MCF 10A (cell line): ENCODE measurements at regions of chr3 and their contacts with region 1.

Region 1: GRCh38 chr3:170180908-170181879 is at the start of gene PHC3:
- DNase-seq: peak; percentile 93
- H3K4me3 Mint-ChIP-seq: peak within 1 kb of the TSS; percentile 89
- H3K27ac Mint-ChIP-seq: peak within 1 kb of the TSS; percentile 96
- H3K4me1 Mint-ChIP-seq: peaks cover 6% of the 10 kb centered on the region
- H3K27me3 Mint-ChIP-seq: no peaks in the 10 kb centered on the region
- CTCF ChIP-seq: no peak
- total RNA-seq, gene PHC3: 54.3 and 65.3 TPM in 2 replicates

Region 2: DNA sequence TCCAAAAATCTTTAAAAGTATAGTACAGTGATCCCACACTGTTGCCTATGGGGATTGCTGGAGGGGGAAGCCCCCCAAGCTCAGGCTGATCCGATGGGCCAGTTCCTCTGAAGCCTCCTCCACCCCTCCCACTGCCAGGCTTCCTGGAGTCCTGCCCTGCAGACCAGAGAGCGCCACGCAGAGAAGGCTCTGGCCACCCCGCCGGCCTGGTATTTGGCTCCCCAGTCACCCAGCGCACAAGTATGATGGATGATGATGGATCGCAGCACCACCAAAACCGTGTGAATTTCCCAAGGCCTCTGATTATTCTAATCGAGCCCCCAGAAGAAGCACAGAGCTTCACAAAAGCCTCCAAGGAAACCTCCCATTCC is 776.7 kb before region 1 on chr3:
- CTCF ChIA-PET with region 1: no interaction called
- POLR2A ChIA-PET with region 1: no interaction called
- intact Hi-C with region 1: no loop called
- DNase-seq: no peak
- H3K4me3 Mint-ChIP-seq: no peak overlapping the region
- H3K27ac Mint-ChIP-seq: peak overlapping the region; percentile 37
- H3K4me1 Mint-ChIP-seq: no peaks in the 10 kb centered on the region
- H3K27me3 Mint-ChIP-seq: no peaks in the 10 kb centered on the region
- CTCF ChIP-seq: no peak

Region 3: DNA sequence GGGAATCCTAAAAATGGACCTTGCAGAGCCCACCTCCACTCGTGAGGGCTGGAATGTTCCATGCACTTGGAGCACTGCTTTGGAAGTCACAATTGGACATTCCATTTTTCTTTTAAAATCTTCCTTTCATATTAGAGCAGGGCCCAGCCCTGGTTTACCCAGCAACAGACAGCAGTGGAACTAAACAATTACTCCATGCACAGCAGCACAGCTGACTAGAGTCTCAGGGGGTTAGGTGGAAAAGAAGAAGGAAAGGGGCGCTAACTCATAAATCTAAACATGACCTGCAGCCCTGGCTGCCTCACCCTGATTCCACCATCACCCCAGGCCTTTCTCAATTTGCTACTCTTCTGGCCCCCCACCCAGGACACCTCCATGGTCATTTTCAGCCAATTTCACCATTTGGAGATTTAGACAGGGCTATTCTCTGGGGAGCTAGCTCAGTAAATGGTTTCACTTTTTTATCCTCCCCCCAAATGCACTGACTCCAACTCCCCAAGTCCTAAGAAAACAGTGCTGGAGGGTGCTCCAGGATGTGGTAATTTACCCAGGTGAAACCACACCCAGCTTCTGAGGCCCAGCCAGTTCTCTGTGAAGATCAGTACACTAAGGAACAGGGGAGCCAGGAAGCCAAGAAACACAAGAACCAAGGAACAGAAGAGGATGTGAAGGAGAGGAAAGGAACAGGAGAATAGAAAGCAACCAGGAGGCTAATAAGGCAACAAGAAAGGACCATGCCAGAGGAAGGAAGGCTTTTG is 309.9 kb before region 1 on chr3:
- CTCF ChIA-PET with region 1: no interaction called
- POLR2A ChIA-PET with region 1: no interaction called
- intact Hi-C with region 1: loop called (anchors 5 kb)
- DNase-seq: peak; percentile 14
- H3K4me3 Mint-ChIP-seq: no peak overlapping the region
- H3K27ac Mint-ChIP-seq: no peak overlapping the region
- H3K4me1 Mint-ChIP-seq: peaks cover 7% of the 10 kb centered on the region
- H3K27me3 Mint-ChIP-seq: no peaks in the 10 kb centered on the region
- CTCF ChIP-seq: no peak

Region 4: DNA sequence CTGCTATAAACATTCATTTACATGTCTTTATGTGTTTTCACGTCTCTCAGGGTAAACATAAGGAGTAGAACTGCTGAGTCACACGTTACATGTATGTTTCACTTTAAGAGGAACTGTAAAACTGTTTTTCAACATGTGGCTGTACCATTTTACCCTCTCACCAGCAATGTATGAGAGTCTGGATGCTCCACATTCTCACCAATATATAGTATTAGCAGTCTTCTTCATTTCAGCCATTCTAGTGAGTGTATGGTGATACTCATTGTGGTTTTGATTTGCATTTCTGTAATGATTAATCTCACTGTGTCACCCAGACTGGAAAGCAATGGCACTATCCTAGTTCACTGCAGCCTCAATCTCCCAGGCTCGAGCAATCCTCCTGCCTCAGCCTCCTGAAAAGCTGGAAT is 36.8 kb before region 1 on chr3:
- CTCF ChIA-PET with region 1: no interaction called
- POLR2A ChIA-PET with region 1: no interaction called
- intact Hi-C with region 1: no loop called
- DNase-seq: no peak
- H3K4me3 Mint-ChIP-seq: no peak overlapping the region
- H3K27ac Mint-ChIP-seq: no peak overlapping the region
- H3K4me1 Mint-ChIP-seq: no peaks in the 10 kb centered on the region
- H3K27me3 Mint-ChIP-seq: no peaks in the 10 kb centered on the region
- CTCF ChIP-seq: no peak

Region 5: DNA sequence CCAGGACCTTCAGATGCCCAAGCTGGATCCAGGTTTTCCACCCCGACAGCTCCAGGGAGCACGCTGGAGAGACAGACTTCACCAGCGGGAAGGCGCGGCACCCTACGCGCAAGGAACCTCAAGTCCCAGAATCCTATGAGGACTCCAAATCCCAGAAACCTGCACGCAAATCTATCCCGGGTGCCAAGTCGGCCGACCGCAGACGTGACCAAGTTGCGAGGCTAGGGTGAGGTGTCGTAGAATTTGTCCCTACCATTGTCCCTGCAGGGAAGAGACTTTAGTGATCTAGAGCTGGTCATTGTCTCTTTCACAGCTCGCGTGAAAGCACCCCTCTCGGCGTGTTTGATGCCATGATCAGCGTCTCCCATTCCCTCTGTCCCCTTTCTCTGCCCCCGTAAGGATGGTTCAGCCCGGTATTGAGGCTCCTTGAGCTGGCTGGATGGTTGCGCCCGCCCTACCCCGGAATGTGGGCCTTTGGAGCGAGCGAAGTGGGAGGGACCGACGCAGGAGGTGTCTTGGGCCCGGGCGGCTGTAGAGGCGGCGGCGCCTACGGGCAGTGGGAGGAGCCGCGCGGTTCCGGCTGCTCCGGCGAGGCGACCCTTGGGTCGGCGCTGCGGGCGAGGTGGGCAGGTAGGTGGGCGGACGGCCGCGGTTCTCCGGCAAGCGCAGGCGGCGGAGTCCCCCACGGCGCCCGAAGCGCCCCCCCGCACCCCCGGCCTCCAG is 40.9 kb after region 1 on chr3 and contains the start of gene PRKCI:
- CTCF ChIA-PET with region 1: interaction called, 6 read pairs
- POLR2A ChIA-PET with region 1: interaction called, 35 read pairs
- intact Hi-C with region 1: loop called (anchors 5 kb)
- DNase-seq: peak; percentile 98
- H3K4me3 Mint-ChIP-seq: peak within 1 kb of the TSS; percentile 86
- H3K27ac Mint-ChIP-seq: peak within 1 kb of the TSS; percentile 99
- H3K4me1 Mint-ChIP-seq: peaks cover 24% of the 10 kb centered on the region
- H3K27me3 Mint-ChIP-seq: no peaks in the 10 kb centered on the region
- CTCF ChIP-seq: no peak
- total RNA-seq, gene PRKCI: 46.3 and 62.8 TPM in 2 replicates

Region 6: DNA sequence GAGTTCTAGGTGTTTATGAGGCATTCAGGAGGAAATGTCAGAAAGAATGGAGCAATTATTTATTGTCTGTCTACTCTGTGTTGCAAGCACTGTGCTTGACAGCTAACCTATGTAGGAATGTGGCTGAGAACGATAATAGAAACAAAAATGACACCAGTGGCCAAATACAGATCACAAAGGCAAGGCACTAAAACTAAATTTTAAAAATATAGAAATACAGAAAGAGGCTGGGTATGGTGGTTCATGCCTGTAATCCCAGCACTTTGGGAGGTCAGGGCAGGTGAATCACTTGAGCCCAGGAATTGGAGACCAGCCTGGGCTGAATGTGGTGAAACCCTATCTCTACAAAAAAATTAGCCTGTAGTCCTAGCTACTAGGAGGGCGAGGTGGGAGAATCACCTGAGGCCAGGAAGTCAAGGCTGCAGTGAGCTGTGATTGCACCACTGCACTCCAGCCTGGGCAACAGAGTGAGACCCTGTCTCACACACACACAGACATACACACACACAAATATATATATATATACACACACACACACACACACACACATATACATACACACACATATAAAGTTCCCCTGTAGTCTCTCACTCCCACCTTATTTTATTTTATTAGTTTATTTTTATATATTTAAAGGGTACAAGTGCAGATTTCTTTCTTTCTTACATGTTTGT is 47.0 kb after region 1 on chr3:
- CTCF ChIA-PET with region 1: interaction called, 6 read pairs
- POLR2A ChIA-PET with region 1: interaction called, 35 read pairs
- intact Hi-C with region 1: loop called (anchors 5 kb)
- DNase-seq: peak; percentile 66
- H3K4me3 Mint-ChIP-seq: peak overlapping the region; percentile 34
- H3K27ac Mint-ChIP-seq: peak overlapping the region; percentile 79
- H3K4me1 Mint-ChIP-seq: peaks cover 42% of the 10 kb centered on the region
- H3K27me3 Mint-ChIP-seq: no peaks in the 10 kb centered on the region
- CTCF ChIP-seq: no peak

Region 7: GRCh38 chr3:170257145-170257544 is 76.0 kb after region 1 on chr3:
- CTCF ChIA-PET with region 1: no interaction called
- POLR2A ChIA-PET with region 1: interaction called, 6 read pairs
- intact Hi-C with region 1: loop called (anchors 10 kb)
- DNase-seq: no peak
- H3K4me3 Mint-ChIP-seq: no peak overlapping the region
- H3K27ac Mint-ChIP-seq: no peak overlapping the region
- H3K4me1 Mint-ChIP-seq: peaks cover 14% of the 10 kb centered on the region
- H3K27me3 Mint-ChIP-seq: no peaks in the 10 kb centered on the region
- CTCF ChIP-seq: no peak

Region 8: DNA sequence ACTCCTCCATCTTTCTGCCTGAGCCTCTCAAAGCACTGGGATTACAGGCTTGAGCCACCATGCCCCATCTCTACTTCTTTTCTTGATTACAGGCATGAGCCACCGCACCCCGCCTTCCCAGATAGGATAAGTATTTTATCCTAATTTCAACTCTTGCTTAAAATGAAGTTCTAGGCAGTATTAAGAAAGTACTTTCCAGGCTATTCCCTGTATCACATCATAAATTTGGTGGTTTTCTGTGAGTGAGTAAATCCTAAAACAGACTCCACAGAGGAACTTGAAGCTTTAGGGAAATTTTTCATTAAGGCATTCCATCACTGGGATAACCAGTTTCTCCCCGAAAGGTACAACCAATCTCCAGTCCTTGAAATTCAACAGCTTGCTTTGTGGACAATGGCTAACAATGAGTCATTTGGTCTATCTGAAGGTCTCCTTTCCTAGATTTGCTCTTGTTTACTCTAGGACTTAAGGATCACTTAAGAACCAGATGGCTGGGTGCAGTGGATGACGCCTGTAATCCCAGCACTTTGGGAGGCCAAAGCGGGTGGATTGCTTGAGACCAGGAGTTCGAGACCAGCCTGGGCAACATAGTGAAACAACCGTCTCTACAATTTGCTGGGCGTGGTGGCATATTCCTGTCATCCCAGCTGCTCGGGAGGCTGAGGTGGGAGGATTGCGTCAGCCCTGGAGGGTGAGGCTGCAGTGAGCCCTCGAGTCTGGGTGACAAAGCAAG is 126.6 kb after region 1 on chr3:
- CTCF ChIA-PET with region 1: no interaction called
- POLR2A ChIA-PET with region 1: no interaction called
- intact Hi-C with region 1: loop called (anchors 10 kb)
- DNase-seq: peak; percentile 32
- H3K4me3 Mint-ChIP-seq: no peak overlapping the region
- H3K27ac Mint-ChIP-seq: no peak overlapping the region
- H3K4me1 Mint-ChIP-seq: no peaks in the 10 kb centered on the region
- H3K27me3 Mint-ChIP-seq: no peaks in the 10 kb centered on the region
- CTCF ChIP-seq: no peak

Region 9: DNA sequence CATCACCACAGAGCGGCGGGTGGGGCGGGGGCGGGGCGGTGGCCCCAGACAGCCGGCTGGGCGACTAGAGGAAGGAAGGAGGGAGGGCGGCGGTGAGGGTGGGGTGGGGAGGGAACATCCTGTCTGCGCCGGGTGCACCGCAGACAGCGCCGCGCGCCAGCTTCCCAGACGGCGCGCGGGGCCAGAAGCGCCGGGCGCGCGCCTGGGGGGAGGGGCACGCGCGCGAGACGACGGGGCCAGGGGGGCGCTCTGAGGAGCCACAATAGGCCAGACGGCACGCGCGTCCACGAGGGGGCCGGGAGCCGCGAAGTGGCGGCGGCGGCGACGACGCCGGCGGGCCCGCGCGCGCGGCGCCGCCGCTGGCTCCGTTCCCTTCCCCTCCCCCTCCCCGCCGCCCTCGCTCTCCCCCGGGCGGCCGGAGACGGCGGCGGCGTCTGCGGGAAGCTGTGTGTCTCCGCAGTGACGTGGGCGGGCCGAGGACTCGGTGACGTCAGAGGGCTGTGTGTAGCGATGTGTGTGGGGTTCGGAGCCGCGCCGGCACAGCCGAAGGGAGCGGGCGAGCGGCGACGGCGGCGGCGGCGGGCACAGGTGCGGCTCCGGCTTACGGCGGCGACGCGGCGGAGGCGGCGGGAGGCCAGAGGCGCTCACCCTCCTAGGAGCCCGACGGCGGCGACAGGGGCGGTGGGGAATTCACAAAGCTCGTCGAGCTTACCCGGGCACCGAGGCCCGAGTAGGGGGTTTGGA is 176.2 kb after region 1 on chr3 and contains the start of gene SKIL:
- CTCF ChIA-PET with region 1: no interaction called
- POLR2A ChIA-PET with region 1: interaction called, 6 read pairs
- intact Hi-C with region 1: loop called (anchors 2 kb)
- DNase-seq: peak; percentile 96
- H3K4me3 Mint-ChIP-seq: peak within 1 kb of the TSS; percentile 98
- H3K27ac Mint-ChIP-seq: peak within 1 kb of the TSS; percentile 99
- H3K4me1 Mint-ChIP-seq: peaks cover 12% of the 10 kb centered on the region
- H3K27me3 Mint-ChIP-seq: no peaks in the 10 kb centered on the region
- CTCF ChIP-seq: peak; percentile 8
- total RNA-seq, gene SKIL: 31.9 and 34.7 TPM in 2 replicates